ENCODE measurements at regions of chr3 and their contacts with region 1.

Region 1: DNA sequence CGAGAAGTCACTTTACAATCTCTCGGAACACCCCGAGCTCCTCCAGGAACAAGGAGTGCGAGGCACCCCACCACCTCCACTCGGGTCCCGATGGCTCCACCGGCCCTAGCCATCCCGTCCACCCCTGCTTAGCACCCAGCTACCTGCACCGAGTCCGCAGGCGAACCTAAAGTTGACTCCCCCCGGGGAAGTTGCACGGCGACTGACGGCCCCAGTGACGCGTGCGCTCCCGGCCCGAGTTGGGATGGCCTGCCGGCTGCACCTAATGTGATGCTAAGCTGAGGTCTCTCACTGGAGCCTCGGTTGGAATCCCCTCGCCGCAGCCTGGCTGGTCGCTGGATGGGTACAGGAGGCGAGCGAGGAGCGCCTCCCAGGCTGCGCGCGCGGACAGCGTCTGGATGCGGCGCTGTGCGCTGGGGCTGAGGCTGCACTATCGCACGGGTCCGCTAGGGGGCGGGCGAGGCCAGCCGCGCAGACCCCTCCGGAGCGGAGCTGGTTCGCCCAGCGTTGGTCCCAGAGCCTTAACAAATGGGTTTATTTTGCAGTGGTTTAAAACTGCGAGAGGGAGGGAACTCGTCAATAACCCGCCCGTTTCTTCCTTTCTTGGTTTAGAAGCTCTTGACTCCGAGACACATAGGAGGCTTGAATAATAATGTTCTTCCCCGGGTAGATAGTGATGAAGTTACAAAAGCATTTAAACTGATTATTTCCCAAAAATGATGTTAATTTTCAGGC is at the start of gene OXTR:
- DNase-seq: peak; percentile 78
- H3K4me3 ChIP-seq: peak within 1 kb of the TSS; percentile 78
- CTCF ChIP-seq: peak; percentile 100

Region 2: GRCh38 chr3:8509961-8510360 is 259.3 kb before region 1 on chr3:
- CTCF ChIA-PET with region 1: no interaction called
- POLR2A ChIA-PET with region 1: no interaction called
- DNase-seq: no peak
- H3K4me3 ChIP-seq: no peak overlapping the region
- CTCF ChIP-seq: no peak

Region 3: DNA sequence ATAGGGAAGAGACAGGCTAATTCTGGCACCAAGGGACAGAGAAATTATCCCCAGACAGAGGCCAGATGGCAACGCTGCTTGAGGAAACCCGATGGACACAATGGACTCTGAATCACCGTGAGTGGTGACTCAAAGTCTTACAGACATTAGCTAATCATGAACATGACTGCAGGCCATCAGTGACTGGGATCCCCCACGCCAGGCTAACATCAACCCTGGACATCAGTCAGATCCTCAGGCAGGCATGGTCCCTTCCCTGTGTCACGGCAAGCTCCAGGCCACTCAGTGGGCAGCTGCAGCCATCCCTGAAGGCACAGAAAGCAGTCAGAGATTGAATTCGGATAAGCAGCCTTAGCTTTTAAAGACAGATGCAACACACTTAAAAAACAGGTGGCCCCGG is 24.0 kb after region 1 on chr3:
- CTCF ChIA-PET with region 1: interaction called, 14 read pairs
- POLR2A ChIA-PET with region 1: no interaction called
- DNase-seq: peak; percentile 42
- H3K4me3 ChIP-seq: no peak overlapping the region
- CTCF ChIP-seq: no peak

Region 4: DNA sequence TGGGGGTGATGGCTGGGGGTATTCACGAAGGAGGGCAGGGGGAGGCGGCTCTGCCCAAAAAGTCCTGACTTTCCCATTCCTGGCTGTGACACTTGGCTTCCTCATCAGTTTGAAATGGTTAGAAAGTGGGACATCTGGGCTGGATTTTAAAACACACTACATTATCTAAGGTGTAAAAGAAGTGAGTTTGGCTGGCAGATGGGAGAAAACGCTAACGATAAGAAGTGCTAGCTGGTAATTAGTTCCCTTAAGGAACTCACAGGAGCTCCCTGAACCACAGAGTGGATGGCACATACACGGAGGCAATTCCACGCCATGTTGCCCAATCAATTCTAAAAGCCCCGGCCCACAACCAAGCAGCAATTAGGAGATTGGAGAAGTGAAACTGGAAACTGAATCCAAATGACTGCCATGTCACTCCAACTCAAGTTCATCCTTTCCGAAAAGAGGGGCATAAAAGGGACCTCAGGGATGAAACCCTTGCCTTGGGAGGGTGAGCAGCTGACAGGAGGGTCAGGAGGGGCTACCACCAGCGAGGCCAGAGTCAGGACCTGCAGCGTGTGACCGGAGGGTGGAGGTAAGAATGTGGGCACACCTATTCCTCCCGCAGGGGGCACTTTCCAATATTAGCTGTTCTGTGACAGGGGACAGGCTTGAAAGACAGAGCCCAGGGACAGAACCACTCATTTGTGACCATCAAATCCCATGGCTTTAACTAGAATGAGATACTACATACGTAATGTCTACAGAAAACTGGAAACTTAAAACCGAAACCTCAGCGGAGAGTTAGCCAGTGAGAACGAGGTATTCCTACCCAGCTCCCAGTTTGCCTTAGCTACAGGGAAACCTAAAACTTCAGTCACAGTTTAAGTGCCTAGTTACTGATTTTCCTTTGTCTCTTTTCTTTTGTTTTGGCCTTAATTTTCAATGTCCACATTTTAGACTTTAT is 95.4 kb after region 1 on chr3:
- CTCF ChIA-PET with region 1: interaction called, 14 read pairs
- POLR2A ChIA-PET with region 1: no interaction called
- DNase-seq: no peak
- H3K4me3 ChIP-seq: no peak overlapping the region
- CTCF ChIP-seq: no peak

Region 5: DNA sequence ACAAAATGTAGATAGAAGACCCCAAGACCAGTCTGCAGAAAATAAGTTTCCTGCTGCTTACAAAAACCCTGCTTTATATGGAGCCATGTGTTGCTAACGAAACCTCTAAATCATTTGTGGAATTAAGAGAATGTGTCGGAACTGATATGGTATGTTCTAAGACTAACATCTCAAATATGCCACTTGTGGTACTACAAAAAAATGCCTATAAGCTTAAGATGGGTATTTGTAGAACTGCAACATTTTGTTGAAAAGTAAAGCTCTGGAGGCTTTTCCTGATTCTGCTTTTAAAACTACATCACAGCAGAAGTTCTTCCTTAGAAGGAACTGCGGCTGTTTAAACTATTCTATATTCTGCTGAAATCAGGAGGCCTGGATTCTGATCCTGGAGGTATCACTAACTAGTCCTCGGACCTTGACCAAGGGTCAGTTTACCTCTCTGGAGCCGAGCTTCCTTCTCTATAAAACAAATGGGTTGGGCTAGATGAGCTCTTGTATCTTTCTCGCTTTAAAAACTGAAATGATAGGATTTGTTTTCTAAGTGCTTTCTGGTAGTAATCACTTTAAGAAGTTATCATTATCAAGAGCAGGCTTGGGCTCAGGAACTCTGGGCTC is 119.2 kb after region 1 on chr3:
- CTCF ChIA-PET with region 1: interaction called, 77 read pairs
- POLR2A ChIA-PET with region 1: interaction called, 11 read pairs
- DNase-seq: peak; percentile 91
- H3K4me3 ChIP-seq: no peak overlapping the region
- CTCF ChIP-seq: no peak

Region 6: GRCh38 chr3:8938021-8938420 is 168.8 kb after region 1 on chr3:
- CTCF ChIA-PET with region 1: interaction called, 95 read pairs
- POLR2A ChIA-PET with region 1: no interaction called
- DNase-seq: no peak
- H3K4me3 ChIP-seq: no peak overlapping the region
- CTCF ChIP-seq: peak; percentile 28

Region 7: DNA sequence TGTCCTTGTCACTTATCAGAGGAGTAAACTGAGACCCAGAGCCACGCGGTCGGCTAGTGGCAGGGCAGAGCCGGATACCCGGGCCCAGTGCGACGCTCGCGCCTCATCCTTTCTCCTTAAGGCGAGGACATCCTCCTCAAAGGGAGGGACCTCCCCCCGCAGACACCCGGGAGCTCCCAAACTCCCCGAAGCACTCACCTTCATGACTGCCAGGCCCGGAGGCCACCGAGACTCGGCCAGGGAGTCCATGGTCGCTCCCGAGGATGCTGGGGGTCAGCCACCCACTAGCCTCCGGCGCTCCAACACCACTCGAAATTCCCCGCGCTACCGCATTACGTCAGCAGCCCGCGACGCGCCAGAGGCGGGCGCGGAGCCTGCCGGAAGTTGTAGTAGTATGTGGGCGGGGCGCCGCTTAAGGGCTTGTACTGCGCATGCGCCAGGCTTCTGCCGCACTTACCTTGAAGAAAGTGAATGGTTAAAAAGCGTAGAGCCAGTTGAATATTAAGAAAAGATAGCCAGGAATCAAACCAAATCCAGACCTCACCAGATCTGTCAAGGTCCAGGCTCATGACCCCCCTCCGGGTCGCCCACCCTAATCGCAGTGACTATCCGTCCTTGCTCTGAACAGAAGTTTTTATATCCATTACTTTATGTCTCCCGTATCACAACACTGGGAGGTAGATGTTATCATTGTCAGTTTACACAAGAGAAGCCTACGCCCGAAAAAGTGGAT is 194.0 kb after region 1 on chr3 and contains the start of gene RAD18:
- CTCF ChIA-PET with region 1: interaction called, 100 read pairs
- POLR2A ChIA-PET with region 1: no interaction called
- DNase-seq: peak; percentile 40
- H3K4me3 ChIP-seq: peak within 1 kb of the TSS; percentile 87
- CTCF ChIP-seq: no peak

Region 8: DNA sequence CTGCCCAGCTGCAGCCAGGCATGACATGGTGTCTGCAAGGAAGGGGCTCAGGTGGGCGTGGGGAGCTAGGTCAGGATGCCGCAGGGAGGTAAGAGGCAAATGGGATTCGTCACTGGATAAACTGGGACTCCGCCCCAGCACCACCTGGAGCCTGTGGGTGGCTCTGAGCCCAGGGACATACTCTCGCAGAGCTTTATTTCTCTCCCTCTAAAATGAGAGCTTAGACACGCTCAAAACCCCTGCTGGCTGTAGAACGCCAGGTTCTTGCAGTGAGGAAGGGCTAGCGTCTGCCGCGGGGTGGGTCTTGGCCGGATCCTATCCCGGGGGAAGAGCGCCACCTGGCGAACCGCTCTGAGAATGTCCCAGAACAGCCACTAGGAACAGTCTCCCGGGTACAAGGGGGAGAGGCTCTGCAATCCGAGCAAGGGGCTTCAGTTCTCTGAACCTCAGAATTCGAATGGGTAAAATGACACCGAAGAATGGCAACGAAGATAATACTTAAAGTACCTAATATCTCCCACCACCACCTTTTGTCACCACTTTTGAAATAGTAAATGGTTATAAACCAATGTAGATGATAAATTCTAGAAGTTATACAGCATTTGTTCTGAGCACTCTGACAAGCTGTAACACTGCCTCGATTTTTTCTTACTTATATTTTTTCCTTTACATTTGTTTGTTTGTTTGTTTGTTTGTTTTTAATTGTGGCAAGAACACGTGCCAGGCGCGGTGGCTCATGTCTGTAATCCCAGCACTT is 533.3 kb after region 1 on chr3:
- CTCF ChIA-PET with region 1: interaction called, 11 read pairs
- POLR2A ChIA-PET with region 1: no interaction called
- DNase-seq: no peak
- H3K4me3 ChIP-seq: peak overlapping the region; percentile 38
- CTCF ChIP-seq: peak; percentile 86